Common myeloid progenitor, CD34-positive (primary cell): ENCODE measurements at regions of chr2 and their contacts with region 1.

Region 1: DNA sequence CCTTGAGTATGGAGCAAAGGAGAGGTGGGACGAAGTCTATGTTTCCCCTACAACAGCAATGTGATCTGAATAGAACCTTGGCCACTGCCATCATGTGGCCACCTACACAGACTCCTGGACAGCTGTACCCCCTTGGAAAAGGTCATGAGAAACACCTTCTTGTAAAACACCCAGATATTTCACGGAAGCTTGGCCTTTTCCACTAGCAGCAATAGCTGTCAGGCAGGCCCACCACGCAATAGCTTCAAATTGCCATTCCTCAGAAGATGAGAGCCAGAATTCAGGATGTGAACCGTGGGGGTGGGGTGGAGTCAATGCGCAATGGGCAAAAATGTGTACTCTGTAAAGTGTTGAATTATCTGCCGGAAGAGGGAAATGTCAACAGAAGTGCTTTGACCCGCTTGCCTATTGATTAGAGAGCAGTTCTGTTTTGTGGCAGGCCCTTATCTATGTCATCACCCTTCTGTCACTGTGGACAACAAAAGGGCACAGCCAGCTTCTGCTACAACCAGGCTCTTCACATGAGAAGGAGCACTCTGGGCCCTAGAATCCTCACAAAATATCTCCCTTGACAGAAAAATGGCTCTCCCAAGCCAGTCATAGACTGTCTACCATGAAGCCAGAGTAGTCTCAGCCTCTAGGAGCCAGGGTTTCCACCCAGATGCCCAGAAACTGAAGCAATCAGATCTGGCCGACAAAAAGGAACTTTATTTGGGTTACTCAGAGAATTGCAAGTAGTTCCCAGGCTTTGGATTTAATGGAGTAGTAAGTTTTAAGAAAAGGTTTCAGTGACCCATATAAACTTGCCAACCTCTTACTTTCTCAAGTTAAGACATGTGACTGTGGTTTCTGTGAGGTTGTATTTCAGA is 9.5 kb downstream of the INPP1 start:
- DNase-seq: peak in 1 of 3 donors; percentile 42
- H3K4me3 ChIP-seq: no peak overlapping the region
- H3K27ac ChIP-seq: peak overlapping the region in 1 of 2 experiments; percentile 39
- H3K4me1 ChIP-seq: peaks cover 0 to 9% (median 3%) of the 10 kb centered on the region in 4 experiments
- H3K27me3 ChIP-seq: no peaks in the 10 kb centered on the region

Region 2: GRCh38 chr2:190319555-190320498 is 33.1 kb before region 1 on chr2 and contains the start of gene HIBCH:
- CTCF ChIA-PET with region 1: interaction called, 11 read pairs
- POLR2A ChIA-PET with region 1: no interaction called
- DNase-seq: peak; percentile 87 to 94 (median 92)
- H3K4me3 ChIP-seq: peak within 1 kb of the TSS; percentile 72 to 92 (median 78)
- H3K27ac ChIP-seq: peak within 1 kb of the TSS; percentile 65 to 85
- H3K4me1 ChIP-seq: peaks cover 11 to 30% (median 21%) of the 10 kb centered on the region in 4 experiments
- H3K27me3 ChIP-seq: no peaks in the 10 kb centered on the region